Activated T-helper 2 cell treated with anti-CD3 and anti-CD28 coated beads, Interferon-gamma antibody, Interleukin-2, Interleukin-4, amounts not matched to agents 10 μg/mL and 5 μg/mL and 100 μg/mL, durations not matched to agents 14 hours and 24 hours and 36 hours (primary cell): ENCODE measurements at regions of chr10 and their contacts with region 1.

Region 1: GRCh38 chr10:34637418-34637911 is 177.6 kb downstream of the PARD3 start:
- DNase-seq: peak; percentile 41
- H3K4me3 Mint-ChIP-seq: no peak overlapping the region
- H3K27ac Mint-ChIP-seq: no peak overlapping the region
- H3K4me1 Mint-ChIP-seq: no peaks in the 10 kb centered on the region
- H3K27me3 Mint-ChIP-seq: no peaks in the 10 kb centered on the region

Region 2: GRCh38 chr10:34205452-34205851 is 432.0 kb before region 1 on chr10:
- intact Hi-C with region 1: no loop called
- DNase-seq: no peak
- H3K4me3 Mint-ChIP-seq: no peak overlapping the region
- H3K27ac Mint-ChIP-seq: no peak overlapping the region
- H3K4me1 Mint-ChIP-seq: peaks cover 2% of the 10 kb centered on the region
- H3K27me3 Mint-ChIP-seq: no peaks in the 10 kb centered on the region

Region 3: GRCh38 chr10:34280599-34281374 is 356.7 kb before region 1 on chr10:
- intact Hi-C with region 1: no loop called
- DNase-seq: no peak
- H3K4me3 Mint-ChIP-seq: no peak overlapping the region
- H3K27ac Mint-ChIP-seq: no peak overlapping the region
- H3K4me1 Mint-ChIP-seq: peaks cover 8% of the 10 kb centered on the region
- H3K27me3 Mint-ChIP-seq: peaks cover 7% of the 10 kb centered on the region

Region 4: DNA sequence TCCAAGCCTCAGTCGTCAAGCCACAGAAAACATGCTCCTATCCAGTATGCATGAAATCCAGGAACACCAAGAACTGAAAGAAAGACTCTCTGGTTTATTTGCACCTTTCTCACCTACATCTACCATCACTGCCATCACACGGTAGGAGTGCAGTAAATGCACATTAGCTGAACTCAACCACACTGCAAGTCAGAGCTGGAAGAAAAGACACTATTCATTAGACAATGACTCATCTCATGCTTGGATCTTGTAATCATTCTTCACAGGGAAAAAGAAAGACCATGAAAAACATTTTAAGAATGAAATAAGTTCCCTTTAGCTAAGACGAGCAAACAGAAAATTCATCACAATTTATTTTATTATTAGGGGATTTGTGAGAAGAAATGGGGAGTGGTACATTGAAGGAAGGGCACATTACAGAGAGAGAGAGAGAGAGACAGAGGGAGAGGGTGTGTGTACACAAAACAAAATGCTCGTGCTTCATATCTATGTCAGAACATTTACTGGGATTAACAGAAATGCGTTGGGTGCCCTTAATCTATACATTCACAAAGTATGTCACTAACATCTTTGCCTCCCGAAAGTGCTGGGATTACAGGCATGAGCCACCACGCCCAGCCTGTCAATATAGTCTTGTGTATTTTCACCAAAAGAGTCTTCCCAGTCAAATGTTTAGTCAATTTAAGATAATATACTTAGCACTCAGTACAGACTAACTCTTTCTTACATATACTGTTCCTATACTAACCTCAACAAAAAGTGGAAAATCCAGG is 147.3 kb before region 1 on chr10:
- intact Hi-C with region 1: no loop called
- DNase-seq: no peak
- H3K4me3 Mint-ChIP-seq: no peak overlapping the region
- H3K27ac Mint-ChIP-seq: no peak overlapping the region
- H3K4me1 Mint-ChIP-seq: no peaks in the 10 kb centered on the region
- H3K27me3 Mint-ChIP-seq: no peaks in the 10 kb centered on the region

Region 5: GRCh38 chr10:34522546-34522945 is 114.9 kb before region 1 on chr10:
- intact Hi-C with region 1: loop called (anchors 2 kb)
- DNase-seq: no peak
- H3K4me3 Mint-ChIP-seq: no peak overlapping the region
- H3K27ac Mint-ChIP-seq: no peak overlapping the region
- H3K4me1 Mint-ChIP-seq: no peaks in the 10 kb centered on the region
- H3K27me3 Mint-ChIP-seq: peaks cover 2% of the 10 kb centered on the region

Region 6: GRCh38 chr10:34627331-34627730 is 10.1 kb before region 1 on chr10:
- intact Hi-C with region 1: no loop called
- DNase-seq: no peak
- H3K4me3 Mint-ChIP-seq: no peak overlapping the region
- H3K27ac Mint-ChIP-seq: no peak overlapping the region
- H3K4me1 Mint-ChIP-seq: no peaks in the 10 kb centered on the region
- H3K27me3 Mint-ChIP-seq: no peaks in the 10 kb centered on the region